B cell (primary cell): ENCODE measurements at regions of chr16 and their contacts with region 1.

Region 1: DNA sequence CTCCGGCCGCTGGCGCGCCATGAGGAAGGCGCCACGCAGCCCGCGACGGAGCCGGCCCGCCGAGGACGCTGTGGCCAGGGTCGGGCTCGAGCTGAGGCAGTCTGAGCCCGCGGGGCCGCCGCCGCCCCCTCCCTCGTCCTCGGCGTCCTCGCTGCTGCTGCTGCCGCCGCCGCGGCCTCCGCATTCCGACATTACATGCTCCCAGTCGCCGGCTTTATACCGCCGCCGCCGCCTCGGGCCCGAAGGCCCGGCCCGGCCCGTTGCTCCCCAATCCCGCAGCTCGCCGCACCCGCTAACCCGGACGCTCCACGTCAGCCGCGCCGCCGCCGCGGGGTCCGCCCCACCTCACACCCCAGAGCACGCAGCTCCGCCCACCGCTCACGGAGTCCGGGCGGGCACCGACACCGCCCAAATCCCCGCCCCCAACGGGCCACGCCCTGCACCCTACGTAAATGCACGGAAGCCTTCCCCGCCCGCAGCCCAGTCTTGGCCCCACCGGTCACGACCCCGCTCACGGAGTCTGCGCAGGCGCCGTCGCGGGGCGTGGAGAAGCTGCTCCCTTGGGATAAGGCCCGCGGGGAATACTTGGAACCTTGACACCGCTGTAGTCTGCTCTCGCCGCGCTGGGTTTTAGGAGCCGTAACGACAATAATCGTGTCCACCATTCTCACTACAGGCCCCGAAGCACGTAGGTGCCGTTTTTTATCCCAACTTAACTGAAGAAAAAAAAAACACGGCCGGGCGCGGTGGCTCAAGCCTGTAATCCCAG is at the start of gene TXNDC11:
- DNase-seq: peak; percentile 100
- ATAC-seq: peak; percentile 91
- H3K4me3 ChIP-seq: peak within 1 kb of the TSS; percentile 76 to 97 (median 83)
- H3K4me3 Mint-ChIP-seq: peak within 1 kb of the TSS; percentile 97
- H3K27ac ChIP-seq: peak within 1 kb of the TSS; percentile 81 to 88
- H3K27ac Mint-ChIP-seq: peak within 1 kb of the TSS; percentile 96
- H3K4me1 ChIP-seq: peaks cover 31 to 44% of the 10 kb centered on the region in 2 donors
- H3K4me1 Mint-ChIP-seq: peaks cover 52% of the 10 kb centered on the region
- H3K27me3 ChIP-seq: no peaks in the 10 kb centered on the region
- H3K27me3 Mint-ChIP-seq: no peaks in the 10 kb centered on the region
- CTCF ChIP-seq: no peak
- total RNA-seq, gene TXNDC11: 49.7 and 50.2 TPM in 2 replicates

Region 2: GRCh38 chr16:11597239-11598101 is 145.3 kb before region 1 on chr16:
- CTCF ChIA-PET with region 1: no interaction called
- POLR2A ChIA-PET with region 1: no interaction called
- intact Hi-C with region 1: no loop called
- DNase-seq: no peak
- ATAC-seq: peak; percentile 53
- H3K4me3 ChIP-seq: no peak overlapping the region
- H3K4me3 Mint-ChIP-seq: no peak overlapping the region
- H3K27ac ChIP-seq: no peak overlapping the region
- H3K27ac Mint-ChIP-seq: peak overlapping the region; percentile 62
- H3K4me1 ChIP-seq: peaks cover 0 to 6% of the 10 kb centered on the region in 2 donors
- H3K4me1 Mint-ChIP-seq: peaks cover 14% of the 10 kb centered on the region
- H3K27me3 ChIP-seq: no peaks in the 10 kb centered on the region
- H3K27me3 Mint-ChIP-seq: peaks cover 4% of the 10 kb centered on the region
- CTCF ChIP-seq: no peak

Region 3: GRCh38 chr16:11689031-11689761 is 53.5 kb before region 1 on chr16:
- CTCF ChIA-PET with region 1: no interaction called
- POLR2A ChIA-PET with region 1: interaction called, 3 read pairs
- intact Hi-C with region 1: loop called (anchors 2 kb)
- DNase-seq: peak; percentile 87
- ATAC-seq: peak; percentile 96
- H3K4me3 ChIP-seq: peak overlapping the region in 1 of 5 experiments; percentile 49
- H3K4me3 Mint-ChIP-seq: peak overlapping the region; percentile 88
- H3K27ac ChIP-seq: peak overlapping the region; percentile 80 to 89
- H3K27ac Mint-ChIP-seq: peak overlapping the region; percentile 98
- H3K4me1 ChIP-seq: peaks cover 70 to 71% of the 10 kb centered on the region in 2 donors
- H3K4me1 Mint-ChIP-seq: peaks cover 76% of the 10 kb centered on the region
- H3K27me3 ChIP-seq: no peaks in the 10 kb centered on the region
- H3K27me3 Mint-ChIP-seq: no peaks in the 10 kb centered on the region
- CTCF ChIP-seq: no peak

Region 4: GRCh38 chr16:11768849-11769248 is 26.1 kb after region 1 on chr16:
- CTCF ChIA-PET with region 1: interaction called, 3 read pairs
- POLR2A ChIA-PET with region 1: interaction called, 8 read pairs
- intact Hi-C with region 1: loop called (anchors 1 kb)
- DNase-seq: peak; percentile 75
- ATAC-seq: peak; percentile 76
- H3K4me3 ChIP-seq: peak overlapping the region in 3 of 5 experiments; percentile 12 to 32 (median 13)
- H3K4me3 Mint-ChIP-seq: peak overlapping the region; percentile 73
- H3K27ac ChIP-seq: peak overlapping the region; percentile 67 to 68
- H3K27ac Mint-ChIP-seq: peak overlapping the region; percentile 89
- H3K4me1 ChIP-seq: peaks cover 25 to 39% of the 10 kb centered on the region in 2 donors
- H3K4me1 Mint-ChIP-seq: peaks cover 47% of the 10 kb centered on the region
- H3K27me3 ChIP-seq: no peaks in the 10 kb centered on the region
- H3K27me3 Mint-ChIP-seq: no peaks in the 10 kb centered on the region
- CTCF ChIP-seq: no peak

Region 5: GRCh38 chr16:11783319-11784037 is 40.8 kb after region 1 on chr16:
- CTCF ChIA-PET with region 1: no interaction called
- POLR2A ChIA-PET with region 1: interaction called, 14 read pairs
- intact Hi-C with region 1: loop called (anchors 1 kb)
- DNase-seq: peak; percentile 86
- ATAC-seq: peak; percentile 75
- H3K4me3 ChIP-seq: peak overlapping the region in 4 of 5 experiments; percentile 22 to 57 (median 37)
- H3K4me3 Mint-ChIP-seq: peak overlapping the region; percentile 93
- H3K27ac ChIP-seq: peak overlapping the region; percentile 98
- H3K27ac Mint-ChIP-seq: peak overlapping the region; percentile 98
- H3K4me1 ChIP-seq: peaks cover 31 to 41% of the 10 kb centered on the region in 2 donors
- H3K4me1 Mint-ChIP-seq: peaks cover 55% of the 10 kb centered on the region
- H3K27me3 ChIP-seq: no peaks in the 10 kb centered on the region
- H3K27me3 Mint-ChIP-seq: no peaks in the 10 kb centered on the region
- CTCF ChIP-seq: no peak

Region 6: DNA sequence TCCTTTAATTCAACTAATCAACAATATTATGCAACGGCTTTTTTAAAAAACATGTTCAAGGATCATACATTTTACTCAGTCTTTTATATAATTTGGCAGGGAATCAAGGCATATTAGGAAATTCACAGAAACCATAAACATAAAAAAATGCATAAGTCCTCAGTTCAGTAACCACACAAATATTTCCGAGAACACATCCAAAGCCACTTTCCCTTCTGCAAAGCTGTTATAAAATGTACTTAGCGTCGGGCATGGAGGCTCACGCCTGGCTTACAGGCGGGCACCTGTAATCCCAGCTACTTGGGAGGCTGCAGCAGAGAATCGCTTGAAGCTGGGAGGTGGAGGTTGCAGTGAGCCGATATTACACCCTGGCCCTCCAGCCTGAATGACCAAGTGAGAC is 64.0 kb after region 1 on chr16:
- CTCF ChIA-PET with region 1: interaction called, 4 read pairs
- POLR2A ChIA-PET with region 1: interaction called, 15 read pairs
- intact Hi-C with region 1: loop called (anchors 1 kb)
- DNase-seq: no peak
- ATAC-seq: no peak
- H3K4me3 ChIP-seq: no peak overlapping the region
- H3K4me3 Mint-ChIP-seq: no peak overlapping the region
- H3K27ac ChIP-seq: no peak overlapping the region
- H3K27ac Mint-ChIP-seq: no peak overlapping the region
- H3K4me1 ChIP-seq: peaks cover 0 to 16% of the 10 kb centered on the region in 2 donors
- H3K4me1 Mint-ChIP-seq: peaks cover 8% of the 10 kb centered on the region
- H3K27me3 ChIP-seq: no peaks in the 10 kb centered on the region
- H3K27me3 Mint-ChIP-seq: no peaks in the 10 kb centered on the region
- CTCF ChIP-seq: no peak

Region 7: DNA sequence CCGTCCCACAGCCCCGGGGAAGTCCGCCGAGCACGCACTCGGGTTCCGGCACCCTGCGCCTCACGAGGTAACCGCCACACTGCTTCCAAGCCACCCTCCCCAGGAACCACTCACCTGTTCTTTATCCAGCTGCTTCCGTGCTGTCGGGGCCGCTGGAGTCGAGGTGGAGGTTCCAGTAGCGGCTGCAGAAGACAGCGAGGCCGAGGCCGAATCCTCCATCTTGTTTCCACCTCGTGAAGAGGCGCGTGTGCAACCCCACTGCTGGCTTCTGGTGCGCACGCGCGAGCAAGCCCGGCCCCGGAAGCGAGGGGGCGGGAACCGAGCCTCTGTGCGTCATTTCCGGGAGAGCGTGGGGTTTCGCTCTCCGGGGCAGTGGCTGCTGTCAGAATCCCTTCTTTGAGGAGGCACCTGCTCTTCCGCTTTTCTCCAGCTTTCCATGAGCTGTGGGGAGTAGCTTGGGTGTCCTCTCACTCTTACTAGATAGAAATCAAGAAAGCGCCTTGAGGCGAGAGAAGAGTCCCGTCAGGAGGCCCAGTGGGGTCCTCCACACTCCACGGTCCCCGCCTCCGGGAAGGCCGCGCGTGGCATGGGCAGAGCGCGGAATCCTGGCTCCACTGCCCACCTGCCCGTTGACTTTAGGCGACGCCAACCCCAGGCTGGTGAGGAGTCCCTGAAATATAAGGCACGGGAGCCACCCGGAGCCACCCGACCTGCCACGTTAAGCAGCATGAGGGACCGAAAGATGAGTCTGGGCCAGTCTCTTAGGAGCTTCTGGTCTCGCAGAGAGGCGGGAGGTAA is 108.8 kb after region 1 on chr16 and contains the start of gene RSL1D1:
- CTCF ChIA-PET with region 1: no interaction called
- POLR2A ChIA-PET with region 1: no interaction called
- intact Hi-C with region 1: loop called (anchors 1 kb)
- DNase-seq: peak; percentile 98
- ATAC-seq: peak; percentile 88
- H3K4me3 ChIP-seq: peak within 1 kb of the TSS; percentile 73 to 97 (median 91)
- H3K4me3 Mint-ChIP-seq: peak within 1 kb of the TSS; percentile 97
- H3K27ac ChIP-seq: peak within 1 kb of the TSS; percentile 81 to 94
- H3K27ac Mint-ChIP-seq: peak within 1 kb of the TSS; percentile 97
- H3K4me1 ChIP-seq: peaks cover 18 to 27% of the 10 kb centered on the region in 2 donors
- H3K4me1 Mint-ChIP-seq: peaks cover 40% of the 10 kb centered on the region
- H3K27me3 ChIP-seq: no peaks in the 10 kb centered on the region
- H3K27me3 Mint-ChIP-seq: no peaks in the 10 kb centered on the region
- CTCF ChIP-seq: no peak
- total RNA-seq, gene RSL1D1: 146 and 167 TPM in 2 replicates

Region 8: GRCh38 chr16:11915644-11916523 is 173.2 kb after region 1 on chr16 and contains the start of gene GSPT1:
- CTCF ChIA-PET with region 1: no interaction called
- POLR2A ChIA-PET with region 1: no interaction called
- intact Hi-C with region 1: loop called (anchors 1 kb)
- DNase-seq: peak; percentile 99
- ATAC-seq: peak; percentile 93
- H3K4me3 ChIP-seq: peak within 1 kb of the TSS; percentile 65 to 78 (median 76)
- H3K4me3 Mint-ChIP-seq: peak within 1 kb of the TSS; percentile 91
- H3K27ac ChIP-seq: peak within 1 kb of the TSS; percentile 72 to 82
- H3K27ac Mint-ChIP-seq: peak within 1 kb of the TSS; percentile 95
- H3K4me1 ChIP-seq: peaks cover 29 to 31% of the 10 kb centered on the region in 2 donors
- H3K4me1 Mint-ChIP-seq: peaks cover 32% of the 10 kb centered on the region
- H3K27me3 ChIP-seq: peaks cover 0 to 4% (median 0%) of the 10 kb centered on the region in 4 experiments
- H3K27me3 Mint-ChIP-seq: peaks cover 11% of the 10 kb centered on the region
- CTCF ChIP-seq: no peak
- total RNA-seq, gene GSPT1: 72.6 and 77.0 TPM in 2 replicates

Region 9: GRCh38 chr16:12272264-12272663 is 529.5 kb after region 1 on chr16:
- CTCF ChIA-PET with region 1: no interaction called
- POLR2A ChIA-PET with region 1: no interaction called
- intact Hi-C with region 1: no loop called
- DNase-seq: no peak
- ATAC-seq: no peak
- H3K4me3 ChIP-seq: no peak overlapping the region
- H3K4me3 Mint-ChIP-seq: no peak overlapping the region
- H3K27ac ChIP-seq: no peak overlapping the region
- H3K27ac Mint-ChIP-seq: no peak overlapping the region
- H3K4me1 ChIP-seq: no peaks in the 10 kb centered on the region
- H3K4me1 Mint-ChIP-seq: no peaks in the 10 kb centered on the region
- H3K27me3 ChIP-seq: no peaks in the 10 kb centered on the region
- H3K27me3 Mint-ChIP-seq: no peaks in the 10 kb centered on the region
- CTCF ChIP-seq: no peak